ENCODE measurements at regions of chr2 and their contacts with region 1.

Region 1: GRCh38 chr2:43226558-43226954 is at the start of gene ZFP36L2:
- DNase-seq: peak in 1 of 2 donors; percentile 96
- H3K4me3 ChIP-seq: peak within 1 kb of the TSS; percentile 97 to 99
- H3K27ac ChIP-seq: peak within 1 kb of the TSS; percentile 99
- H3K4me1 ChIP-seq: peaks cover 24% of the 10 kb centered on the region
- H3K27me3 ChIP-seq: no peaks in the 10 kb centered on the region
- CTCF ChIP-seq: peak in 1 of 3 experiments; percentile 25
- POLR2A ChIP-seq: peak; percentile 60 to 92
- total RNA-seq, gene ZFP36L2: 206 TPM

Region 2: DNA sequence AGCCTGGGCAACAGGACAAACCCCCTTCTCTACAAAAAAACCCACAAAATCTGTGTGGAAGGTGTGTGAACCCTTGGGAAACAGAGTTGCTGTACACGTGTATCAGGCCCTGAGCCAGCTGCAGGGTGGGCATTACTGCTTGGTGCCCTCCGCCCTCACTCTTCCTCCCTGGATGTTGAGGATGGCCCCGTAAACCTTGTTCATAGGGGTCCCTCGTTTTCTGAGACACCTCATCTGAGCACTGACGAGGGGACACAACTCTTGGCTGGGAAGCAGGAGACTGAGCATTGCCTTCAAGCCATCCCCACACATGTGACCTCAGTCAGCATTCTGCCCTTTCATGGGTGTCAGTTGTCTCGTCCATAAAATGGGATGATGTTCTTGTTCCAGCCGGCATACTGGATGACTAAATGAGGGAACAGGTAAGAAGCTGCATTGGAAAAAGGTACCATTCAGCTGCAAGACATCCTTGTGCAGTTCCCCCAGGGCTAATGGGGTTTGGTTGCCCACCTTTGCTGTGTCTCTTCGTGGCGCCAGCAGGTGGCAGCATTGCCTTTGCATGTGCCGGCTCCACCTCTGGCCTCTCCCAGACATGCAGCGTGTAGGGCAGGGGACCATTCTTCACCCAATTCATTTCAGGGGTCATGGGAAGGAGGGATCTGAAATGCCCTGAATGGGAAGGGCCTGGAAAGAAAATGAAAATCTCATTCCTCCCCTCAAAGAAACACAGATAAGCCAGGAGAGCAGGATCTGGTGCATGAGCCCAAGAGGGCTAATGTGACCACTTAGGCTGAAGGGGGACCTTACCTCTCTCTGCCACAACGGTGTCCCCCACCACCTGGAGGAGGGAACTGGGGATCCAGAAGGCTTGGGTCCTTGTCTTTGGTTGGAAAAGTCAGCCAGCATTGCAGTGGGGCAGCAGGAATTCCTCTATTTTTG is 397.8 kb before region 1 on chr2:
- intact Hi-C with region 1: loop called (anchors 2 kb)
- DNase-seq: peak; percentile 90 to 95
- H3K4me3 ChIP-seq: no peak overlapping the region
- H3K27ac ChIP-seq: peak overlapping the region; percentile 78
- H3K4me1 ChIP-seq: peaks cover 30% of the 10 kb centered on the region
- H3K27me3 ChIP-seq: no peaks in the 10 kb centered on the region
- CTCF ChIP-seq: peak; percentile 90 to 93 (median 90)
- POLR2A ChIP-seq: no peak

Region 3: DNA sequence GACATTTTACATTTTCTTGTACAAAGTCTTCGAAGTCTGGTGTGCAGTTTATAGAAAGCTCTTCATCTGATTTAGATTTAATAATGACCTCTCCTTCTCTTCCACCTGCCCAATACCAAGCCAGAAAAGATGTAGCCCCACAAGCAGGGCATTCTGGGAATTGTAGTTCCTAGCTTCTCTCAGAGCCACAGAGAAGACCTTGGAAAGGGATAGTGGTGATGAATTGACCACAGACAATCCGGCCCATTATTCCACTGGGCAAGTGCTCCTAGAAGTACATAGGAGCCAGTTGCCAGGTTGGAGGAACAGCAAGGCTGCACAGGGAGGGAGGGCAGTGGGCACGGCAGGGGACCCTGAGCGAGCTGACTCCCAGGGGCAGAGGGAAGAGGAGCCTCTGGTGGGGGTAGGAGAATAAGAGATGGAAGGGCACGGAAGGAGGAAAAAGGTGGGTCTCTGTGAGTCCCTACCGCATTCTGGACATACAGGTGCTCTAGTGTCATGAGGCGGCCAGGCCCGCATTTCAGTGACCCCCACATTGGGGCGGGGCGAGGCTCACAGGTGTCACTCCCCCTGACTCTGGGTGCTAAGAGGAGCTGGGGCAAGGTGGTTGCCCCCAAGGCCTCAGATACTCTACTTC is 281.7 kb before region 1 on chr2:
- intact Hi-C with region 1: loop called (anchors 5 kb)
- DNase-seq: no peak
- H3K4me3 ChIP-seq: no peak overlapping the region
- H3K27ac ChIP-seq: no peak overlapping the region
- H3K4me1 ChIP-seq: peaks cover 29% of the 10 kb centered on the region
- H3K27me3 ChIP-seq: no peaks in the 10 kb centered on the region
- CTCF ChIP-seq: no peak
- POLR2A ChIP-seq: no peak

Region 4: GRCh38 chr2:42974721-42975717 is 251.5 kb before region 1 on chr2:
- intact Hi-C with region 1: loop called (anchors 2 kb)
- DNase-seq: no peak
- H3K4me3 ChIP-seq: peak overlapping the region; percentile 36 to 41
- H3K27ac ChIP-seq: peak overlapping the region; percentile 87
- H3K4me1 ChIP-seq: peaks cover 25% of the 10 kb centered on the region
- H3K27me3 ChIP-seq: no peaks in the 10 kb centered on the region
- CTCF ChIP-seq: peak; percentile 88 to 94 (median 91)
- POLR2A ChIP-seq: no peak

Region 5: GRCh38 chr2:43073368-43073767 is 153.2 kb before region 1 on chr2:
- intact Hi-C with region 1: loop called (anchors 5 kb)
- DNase-seq: no peak
- H3K4me3 ChIP-seq: no peak overlapping the region
- H3K27ac ChIP-seq: peak overlapping the region; percentile 77
- H3K4me1 ChIP-seq: peaks cover 75% of the 10 kb centered on the region
- H3K27me3 ChIP-seq: no peaks in the 10 kb centered on the region
- CTCF ChIP-seq: no peak
- POLR2A ChIP-seq: no peak